SK-N-SH (cell line): ENCODE measurements at regions of chr5 and their contacts with region 1.

Region 1: DNA sequence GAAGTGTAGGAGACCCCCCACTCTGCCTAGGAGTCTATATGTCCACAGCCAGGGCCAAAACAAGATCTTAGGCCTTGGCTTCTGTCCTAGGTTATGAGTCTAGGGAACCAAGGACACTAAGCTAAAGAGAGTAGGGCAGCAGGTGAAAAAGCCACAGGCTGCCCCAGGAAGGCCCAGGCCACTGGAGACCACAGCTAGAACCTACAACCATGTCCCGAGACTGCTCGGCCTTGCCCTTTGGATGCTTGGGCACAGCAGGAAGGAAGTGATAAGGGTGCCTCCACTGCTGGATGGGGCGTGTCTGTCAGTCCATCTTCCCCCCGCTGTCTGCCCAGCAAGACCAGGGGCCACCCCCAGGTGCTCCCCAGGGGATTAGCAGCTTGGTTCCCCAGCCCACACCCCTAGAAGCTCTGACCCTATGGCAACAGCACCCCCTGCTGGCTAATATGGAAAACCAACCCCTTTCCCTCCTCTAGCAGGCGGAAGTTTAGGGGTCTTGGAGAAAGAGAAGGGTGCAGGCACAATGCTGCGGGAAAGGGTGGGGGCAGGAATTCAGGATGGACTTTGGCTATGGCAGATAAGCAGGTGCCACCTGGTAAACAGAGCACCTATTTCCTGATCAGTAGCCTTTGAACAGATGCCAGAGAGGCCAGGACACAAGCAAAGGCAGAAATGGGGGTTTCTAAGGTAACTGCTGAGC is 10.5 kb upstream of the IRF1 start:
- DNase-seq: peak; percentile 82
- H3K4me3 ChIP-seq: peak overlapping the region in 1 of 2 experiments; percentile 20; a peak in 1 of 4 replicates
- H3K27ac ChIP-seq: no peak overlapping the region; a peak in 1 of 4 replicates
- H3K4me1 ChIP-seq: peaks cover 12 to 15% of the 10 kb centered on the region in 2 experiments; a peak in 2 of 4 replicates
- H3K27me3 ChIP-seq: no peaks in the 10 kb centered on the region
- CTCF ChIP-seq: peak; percentile 85
- EP300 ChIP-seq: no peak
- RAD21 ChIP-seq: peak; percentile 90

Region 2: GRCh38 chr5:132410451-132411381 is 90.4 kb before region 1 on chr5:
- CTCF ChIA-PET with region 1: interaction called, 95 read pairs
- POLR2A ChIA-PET with region 1: no interaction called
- DNase-seq: peak; percentile 95
- H3K4me3 ChIP-seq: peak overlapping the region; percentile 71 to 76
- H3K27ac ChIP-seq: peak overlapping the region; percentile 81 to 89
- H3K4me1 ChIP-seq: peaks cover 19 to 26% of the 10 kb centered on the region in 2 experiments
- H3K27me3 ChIP-seq: no peaks in the 10 kb centered on the region
- CTCF ChIP-seq: peak; percentile 62
- EP300 ChIP-seq: 0 out of 4 replicates have a peak, but pooled peaks of 1 of the 2 experiments have one; percentile 6
- RAD21 ChIP-seq: peak; percentile 52

Region 3: GRCh38 chr5:132490486-132491367 is 10.4 kb before region 1 on chr5 and contains the start of gene IRF1:
- CTCF ChIA-PET with region 1: interaction called, 13 read pairs
- POLR2A ChIA-PET with region 1: interaction called, 3 read pairs
- DNase-seq: peak; percentile 99
- H3K4me3 ChIP-seq: peak within 1 kb of the TSS; percentile 86 to 89
- H3K27ac ChIP-seq: peak within 1 kb of the TSS; percentile 89 to 90
- H3K4me1 ChIP-seq: peaks cover 12 to 26% of the 10 kb centered on the region in 2 experiments
- H3K27me3 ChIP-seq: no peaks in the 10 kb centered on the region
- CTCF ChIP-seq: no peak; the same call in 1 of the 2 replicates
- EP300 ChIP-seq: no peak
- RAD21 ChIP-seq: no peak
- polyA plus RNA-seq, gene IRF1: 13.8 and 15.2 TPM in 2 replicates